ENCODE measurements at regions of chr4 and their contacts with region 1.

Region 1: DNA sequence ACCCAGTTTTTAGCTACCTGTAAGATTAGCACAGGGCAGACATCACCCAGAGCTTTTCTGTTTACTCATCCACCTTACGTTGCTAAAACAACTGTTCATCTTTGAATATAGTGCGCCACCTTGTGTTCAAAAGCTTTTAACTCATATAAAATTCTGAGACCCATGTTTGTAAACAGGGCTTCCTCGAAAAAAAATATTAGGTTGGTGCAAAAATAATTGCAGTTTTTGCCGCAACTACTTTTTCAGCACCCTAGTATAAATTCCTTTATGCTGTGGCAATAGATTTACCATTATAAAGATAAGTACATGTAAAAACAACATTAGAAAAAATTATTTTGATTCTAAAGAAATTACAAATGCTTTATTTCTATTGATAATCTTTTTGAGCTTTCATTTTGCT is 147.9 kb downstream of the LRBA start:
- DNase-seq: peak; percentile 50
- H3K4me3 ChIP-seq: no peak overlapping the region
- H3K27ac ChIP-seq: no peak overlapping the region
- H3K27me3 ChIP-seq: no peaks in the 10 kb centered on the region
- CTCF ChIP-seq: peak; percentile 65

Region 2: DNA sequence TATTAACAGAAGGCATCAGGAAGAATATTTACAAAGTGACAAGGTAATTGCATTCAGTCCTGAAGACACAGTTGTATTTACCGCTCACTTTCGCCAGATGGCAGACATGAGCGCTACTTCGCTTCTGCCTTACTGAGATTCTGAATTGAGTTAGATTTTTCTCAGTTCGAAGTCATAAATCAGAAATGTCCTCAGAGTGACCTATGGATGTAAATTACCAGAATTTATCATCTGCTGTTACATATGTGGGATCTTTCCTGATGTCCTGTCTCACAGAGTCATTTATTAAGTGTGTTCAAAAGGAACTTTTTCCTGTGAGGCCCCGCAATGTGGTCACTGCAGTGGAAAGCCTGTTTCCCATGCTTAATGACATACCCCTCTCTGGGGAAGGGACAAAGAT is 886.2 kb before region 1 on chr4:
- CTCF ChIA-PET with region 1: interaction called, 25 read pairs
- POLR2A ChIA-PET with region 1: no interaction called
- DNase-seq: no peak
- H3K4me3 ChIP-seq: no peak overlapping the region
- H3K27ac ChIP-seq: no peak overlapping the region
- H3K27me3 ChIP-seq: no peaks in the 10 kb centered on the region
- CTCF ChIP-seq: peak; percentile 87

Region 3: DNA sequence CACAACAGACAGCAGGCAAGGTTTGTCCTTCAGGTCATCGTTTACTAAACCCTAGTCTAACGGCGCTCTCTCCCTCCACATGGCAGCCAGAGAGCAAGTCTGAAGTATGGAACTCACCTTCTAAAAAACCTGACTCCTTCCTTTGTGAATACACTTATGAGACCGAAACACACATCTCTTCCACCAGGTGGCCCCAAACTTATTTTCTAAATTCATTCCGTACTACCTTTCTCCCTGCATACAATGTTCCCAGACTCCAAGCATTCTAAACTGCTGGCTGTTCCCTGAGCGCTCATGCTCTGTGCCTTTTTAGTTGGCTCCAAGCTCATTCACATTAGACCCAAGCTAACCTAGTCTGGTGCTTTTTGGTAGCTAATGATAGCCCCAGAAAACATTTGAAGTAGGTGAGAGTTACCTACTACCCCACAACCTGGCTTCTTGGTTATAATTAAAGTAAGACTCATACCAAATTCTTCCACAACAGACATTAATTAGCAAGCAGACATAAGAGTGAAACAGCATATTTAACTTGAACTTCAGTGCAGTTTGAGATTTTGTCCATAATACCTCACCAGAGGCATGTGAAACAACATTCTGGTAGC is 856.5 kb before region 1 on chr4:
- CTCF ChIA-PET with region 1: interaction called, 12 read pairs
- POLR2A ChIA-PET with region 1: no interaction called
- DNase-seq: peak; percentile 36
- H3K4me3 ChIP-seq: no peak overlapping the region
- H3K27ac ChIP-seq: no peak overlapping the region
- H3K27me3 ChIP-seq: no peaks in the 10 kb centered on the region
- CTCF ChIP-seq: peak; percentile 66

Region 4: DNA sequence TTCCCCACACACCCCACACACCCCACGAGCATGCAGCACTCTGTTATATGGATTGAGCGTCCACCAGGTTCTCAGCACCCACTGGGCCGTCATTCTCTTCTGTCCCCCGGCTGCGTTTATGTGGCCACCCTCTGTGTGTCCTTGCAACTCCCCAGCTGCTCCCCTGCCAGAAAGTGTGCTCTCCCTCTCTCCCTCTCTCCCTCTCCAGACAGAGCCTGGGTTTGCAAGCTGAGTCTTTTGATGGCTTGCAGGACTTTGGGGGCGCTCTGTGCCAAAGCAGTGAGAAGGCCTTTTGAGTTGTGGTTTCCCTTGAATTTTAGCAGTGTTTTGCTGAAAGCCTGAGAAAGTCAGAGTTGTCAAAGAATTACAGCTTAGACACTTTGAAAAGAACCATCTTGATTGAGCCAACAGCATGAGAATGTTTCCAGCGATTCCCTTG is 615.4 kb before region 1 on chr4:
- CTCF ChIA-PET with region 1: interaction called, 14 read pairs
- POLR2A ChIA-PET with region 1: no interaction called
- DNase-seq: no peak
- H3K4me3 ChIP-seq: no peak overlapping the region
- H3K27ac ChIP-seq: no peak overlapping the region
- H3K27me3 ChIP-seq: no peaks in the 10 kb centered on the region
- CTCF ChIP-seq: no peak

Region 5: DNA sequence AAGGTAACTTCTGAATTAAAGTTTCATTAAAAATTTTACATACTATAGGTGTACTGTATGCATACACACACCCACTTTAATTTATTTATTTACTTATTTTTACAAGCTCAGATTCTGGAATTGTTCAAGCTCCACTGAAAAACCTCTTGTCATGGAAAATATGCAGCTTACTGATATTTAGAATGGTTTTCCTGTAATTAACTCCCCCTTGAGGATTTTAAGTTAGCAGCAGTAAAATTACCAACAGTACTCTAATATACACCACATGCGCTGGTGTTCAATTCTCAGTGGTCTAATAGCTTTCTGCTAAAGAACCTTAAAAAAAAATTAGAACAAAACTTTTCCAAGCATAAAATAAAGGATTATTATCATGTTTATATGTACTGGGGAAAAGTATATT is 273.2 kb before region 1 on chr4:
- CTCF ChIA-PET with region 1: interaction called, 13 read pairs
- POLR2A ChIA-PET with region 1: no interaction called
- DNase-seq: no peak
- H3K4me3 ChIP-seq: no peak overlapping the region
- H3K27ac ChIP-seq: no peak overlapping the region
- H3K27me3 ChIP-seq: no peaks in the 10 kb centered on the region
- CTCF ChIP-seq: peak; percentile 52; the same call in 1 of the 2 replicates

Region 6: DNA sequence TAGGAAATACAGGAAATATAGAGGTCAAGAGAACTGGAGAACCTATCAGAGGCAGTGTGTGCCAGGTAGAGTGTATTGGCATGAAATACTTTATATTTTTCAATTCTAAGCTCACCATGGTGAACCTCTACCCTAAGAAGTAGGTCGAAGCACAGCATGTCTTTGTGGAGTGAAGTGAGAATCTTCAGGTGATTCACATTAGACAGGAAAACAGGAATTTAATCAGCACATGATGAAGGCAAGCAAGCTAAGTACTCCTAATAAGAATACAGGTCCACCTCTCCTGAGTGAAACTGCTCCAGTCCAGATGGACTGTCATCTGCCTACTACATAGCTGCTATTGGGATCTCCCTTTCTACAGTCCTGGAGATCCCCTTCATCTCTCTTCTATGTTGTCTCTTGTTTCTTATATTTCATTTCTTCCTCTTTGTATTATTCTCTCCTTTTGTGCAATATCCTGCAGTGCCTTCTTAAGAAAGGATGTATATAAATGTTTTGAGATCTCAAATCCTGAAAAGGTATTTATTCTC is 11.1 kb before region 1 on chr4:
- CTCF ChIA-PET with region 1: interaction called, 43 read pairs
- POLR2A ChIA-PET with region 1: no interaction called
- DNase-seq: no peak
- H3K4me3 ChIP-seq: no peak overlapping the region
- H3K27ac ChIP-seq: no peak overlapping the region
- H3K27me3 ChIP-seq: no peaks in the 10 kb centered on the region
- CTCF ChIP-seq: no peak

Region 7: DNA sequence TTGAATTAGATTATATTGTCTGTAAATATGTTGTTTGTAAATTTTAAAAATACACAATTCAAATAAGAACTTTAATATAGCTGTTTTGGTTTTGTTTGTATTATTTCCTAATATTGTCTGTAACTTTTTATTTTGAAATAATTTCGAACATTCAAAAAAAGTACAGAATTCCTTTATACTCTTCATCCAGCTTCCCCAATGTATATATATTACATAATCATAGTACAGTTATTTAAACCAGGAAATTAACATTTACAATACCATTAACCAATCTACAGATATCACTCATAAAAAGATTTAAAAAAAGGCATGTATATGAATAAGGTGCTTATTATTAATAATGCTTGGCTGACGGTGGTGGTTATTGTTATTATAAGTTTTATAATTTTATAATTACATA is 63.9 kb after region 1 on chr4:
- CTCF ChIA-PET with region 1: no interaction called
- POLR2A ChIA-PET with region 1: no interaction called
- DNase-seq: no peak
- H3K4me3 ChIP-seq: no peak overlapping the region
- H3K27ac ChIP-seq: no peak overlapping the region
- H3K27me3 ChIP-seq: no peaks in the 10 kb centered on the region
- CTCF ChIP-seq: no peak

Region 8: GRCh38 chr4:151227731-151228130 is 360.6 kb after region 1 on chr4:
- CTCF ChIA-PET with region 1: no interaction called
- POLR2A ChIA-PET with region 1: no interaction called
- DNase-seq: peak; percentile 18
- H3K4me3 ChIP-seq: peak overlapping the region; percentile 43
- H3K27ac ChIP-seq: peak overlapping the region; percentile 71
- H3K27me3 ChIP-seq: no peaks in the 10 kb centered on the region
- CTCF ChIP-seq: no peak